ENCODE measurements at regions of chr10 and their contacts with region 1.

Region 1: DNA sequence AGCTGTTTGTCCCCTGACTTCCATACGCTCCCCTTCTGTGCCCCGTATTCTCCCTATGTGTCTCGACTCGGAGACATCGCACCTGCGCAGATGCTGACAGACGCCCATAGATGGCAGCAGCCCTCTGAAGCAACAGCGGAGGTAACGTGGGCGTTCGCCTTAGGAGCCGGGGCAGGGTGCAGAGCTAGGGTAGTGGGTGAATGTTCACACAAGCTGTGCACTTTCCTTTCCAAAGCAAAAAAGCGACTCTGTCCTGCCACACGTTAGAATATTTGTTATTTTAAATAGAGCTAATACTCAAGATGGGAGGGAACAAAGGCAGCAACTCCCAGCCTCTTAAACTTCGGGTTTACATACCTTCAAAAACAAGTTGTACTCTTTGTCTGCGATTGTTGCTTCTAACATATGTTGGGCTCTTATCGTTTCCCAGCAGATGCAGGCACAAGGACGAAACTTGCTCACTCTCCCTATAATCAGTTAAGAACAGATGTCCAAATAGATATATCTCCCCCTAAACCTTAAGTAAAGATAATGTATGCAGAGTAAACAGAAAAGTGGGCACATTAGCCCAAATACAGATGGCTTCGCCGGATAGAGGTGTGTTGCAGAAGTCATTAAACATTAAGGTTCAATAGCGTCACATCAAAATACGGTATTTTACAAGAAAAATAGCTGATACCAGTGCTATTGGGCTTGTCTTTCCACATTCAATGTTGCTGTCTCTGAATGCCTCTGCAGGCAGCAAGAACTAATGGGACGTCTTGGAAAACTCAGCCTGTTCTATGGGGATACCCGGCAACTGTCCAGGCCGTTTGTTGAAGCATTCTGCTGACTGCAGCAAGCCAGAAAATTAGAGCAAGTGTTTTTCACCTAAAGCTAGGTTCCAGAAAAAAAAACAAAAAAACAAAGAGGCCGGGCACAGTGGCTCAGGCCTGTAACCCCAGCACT is 340.3 kb upstream of the PRKCQ start:
- DNase-seq: peak; percentile 59 to 69 (median 63)
- H3K4me3 ChIP-seq: no peak overlapping the region
- H3K4me3 Mint-ChIP-seq: peak overlapping the region in 3 of 8 donors; percentile 12 to 61 (median 42)
- H3K27ac ChIP-seq: no peak overlapping the region
- H3K27ac Mint-ChIP-seq: peak overlapping the region in 2 of 7 donors; percentile 42 to 50
- H3K4me1 ChIP-seq: peaks cover 19% of the 10 kb centered on the region
- H3K4me1 Mint-ChIP-seq: peaks cover 16 to 19% (median 17%) of the 10 kb centered on the region in 4 donors
- H3K27me3 ChIP-seq: no peaks in the 10 kb centered on the region
- H3K27me3 Mint-ChIP-seq: peaks cover 0 to 4% of the 10 kb centered on the region in 2 donors

Region 2: GRCh38 chr10:6647811-6648526 is 272.4 kb before region 1 on chr10:
- CTCF ChIA-PET with region 1: no interaction called
- POLR2A ChIA-PET with region 1: no interaction called
- intact Hi-C with region 1: no loop called
- DNase-seq: peak; percentile 61 to 72 (median 65)
- H3K4me3 ChIP-seq: no peak overlapping the region
- H3K4me3 Mint-ChIP-seq: no peak overlapping the region
- H3K27ac ChIP-seq: no peak overlapping the region
- H3K27ac Mint-ChIP-seq: peak overlapping the region in 3 of 7 donors; percentile 4 to 75 (median 72)
- H3K4me1 ChIP-seq: peaks cover 23% of the 10 kb centered on the region
- H3K4me1 Mint-ChIP-seq: peaks cover 12 to 30% (median 17%) of the 10 kb centered on the region in 4 donors
- H3K27me3 ChIP-seq: no peaks in the 10 kb centered on the region
- H3K27me3 Mint-ChIP-seq: no peaks in the 10 kb centered on the region

Region 3: GRCh38 chr10:6936931-6937330 is 16.6 kb after region 1 on chr10:
- CTCF ChIA-PET with region 1: interaction called, 31 read pairs
- POLR2A ChIA-PET with region 1: no interaction called
- intact Hi-C with region 1: no loop called
- DNase-seq: no peak
- H3K4me3 ChIP-seq: no peak overlapping the region
- H3K4me3 Mint-ChIP-seq: no peak overlapping the region
- H3K27ac ChIP-seq: no peak overlapping the region
- H3K27ac Mint-ChIP-seq: no peak overlapping the region
- H3K4me1 ChIP-seq: no peaks in the 10 kb centered on the region
- H3K4me1 Mint-ChIP-seq: no peaks in the 10 kb centered on the region
- H3K27me3 ChIP-seq: no peaks in the 10 kb centered on the region
- H3K27me3 Mint-ChIP-seq: peaks cover 4 to 9% of the 10 kb centered on the region in 2 donors

Region 4: GRCh38 chr10:7027237-7027912 is 107.0 kb after region 1 on chr10:
- CTCF ChIA-PET with region 1: interaction called, 10 read pairs
- POLR2A ChIA-PET with region 1: no interaction called
- intact Hi-C with region 1: no loop called
- DNase-seq: no peak
- H3K4me3 ChIP-seq: no peak overlapping the region
- H3K4me3 Mint-ChIP-seq: no peak overlapping the region
- H3K27ac ChIP-seq: no peak overlapping the region
- H3K27ac Mint-ChIP-seq: no peak overlapping the region
- H3K4me1 ChIP-seq: peaks cover 22% of the 10 kb centered on the region
- H3K4me1 Mint-ChIP-seq: peaks cover 6 to 27% (median 18%) of the 10 kb centered on the region in 4 donors
- H3K27me3 ChIP-seq: no peaks in the 10 kb centered on the region
- H3K27me3 Mint-ChIP-seq: no peaks in the 10 kb centered on the region

Region 5: GRCh38 chr10:7121154-7121810 is 200.9 kb after region 1 on chr10:
- CTCF ChIA-PET with region 1: interaction called, 16 read pairs
- POLR2A ChIA-PET with region 1: no interaction called
- intact Hi-C with region 1: loop called (anchors 2 kb)
- DNase-seq: peak; percentile 48 to 65 (median 59)
- H3K4me3 ChIP-seq: no peak overlapping the region
- H3K4me3 Mint-ChIP-seq: no peak overlapping the region
- H3K27ac ChIP-seq: no peak overlapping the region
- H3K27ac Mint-ChIP-seq: peak overlapping the region in 5 of 7 donors; percentile 32 to 74 (median 71)
- H3K4me1 ChIP-seq: peaks cover 6% of the 10 kb centered on the region
- H3K4me1 Mint-ChIP-seq: peaks cover 4 to 7% (median 5%) of the 10 kb centered on the region in 4 donors
- H3K27me3 ChIP-seq: no peaks in the 10 kb centered on the region
- H3K27me3 Mint-ChIP-seq: peaks cover 0 to 5% of the 10 kb centered on the region in 2 donors

Region 6: DNA sequence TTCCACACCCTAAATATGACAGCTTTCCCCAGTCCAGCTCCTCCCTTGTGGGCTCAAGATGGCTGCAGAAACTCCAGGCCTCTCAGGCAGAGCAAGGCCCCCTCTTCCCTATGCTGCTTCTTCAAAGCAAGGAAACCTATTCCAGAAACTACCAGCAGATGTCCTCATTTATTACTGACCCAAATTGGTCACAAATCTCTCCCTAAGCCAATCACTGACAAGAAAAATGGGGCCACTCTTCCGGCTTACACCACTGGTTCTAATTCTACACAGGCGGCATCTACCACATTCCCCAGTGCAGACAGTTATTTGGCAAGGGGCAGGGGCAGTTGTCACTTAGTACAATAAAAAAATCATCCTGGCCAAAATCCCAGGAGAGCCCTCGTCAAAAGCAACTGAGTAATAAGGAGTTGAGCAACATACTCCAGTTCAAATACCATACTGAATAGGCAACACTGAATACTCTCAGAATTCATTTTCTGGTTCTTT is 340.1 kb after region 1 on chr10:
- CTCF ChIA-PET with region 1: interaction called, 8 read pairs
- POLR2A ChIA-PET with region 1: no interaction called
- intact Hi-C with region 1: loop called (anchors 1 kb)
- DNase-seq: peak in 4 of 5 donors; percentile 41 to 48 (median 43)
- H3K4me3 ChIP-seq: no peak overlapping the region
- H3K4me3 Mint-ChIP-seq: peak overlapping the region in 4 of 8 donors; percentile 1 to 78 (median 42)
- H3K27ac ChIP-seq: no peak overlapping the region
- H3K27ac Mint-ChIP-seq: peak overlapping the region in 6 of 7 donors; percentile 62 to 97 (median 84)
- H3K4me1 ChIP-seq: peaks cover 38% of the 10 kb centered on the region
- H3K4me1 Mint-ChIP-seq: peaks cover 34 to 52% (median 47%) of the 10 kb centered on the region in 4 donors
- H3K27me3 ChIP-seq: no peaks in the 10 kb centered on the region
- H3K27me3 Mint-ChIP-seq: no peaks in the 10 kb centered on the region

Region 7: GRCh38 chr10:7417103-7417623 is 496.8 kb after region 1 on chr10:
- CTCF ChIA-PET with region 1: interaction called, 180 read pairs
- POLR2A ChIA-PET with region 1: no interaction called
- intact Hi-C with region 1: loop called (anchors 1 kb)
- DNase-seq: peak in 4 of 5 donors; percentile 46 to 53 (median 50)
- H3K4me3 ChIP-seq: no peak overlapping the region
- H3K4me3 Mint-ChIP-seq: no peak overlapping the region
- H3K27ac ChIP-seq: no peak overlapping the region
- H3K27ac Mint-ChIP-seq: no peak overlapping the region
- H3K4me1 ChIP-seq: peaks cover 20% of the 10 kb centered on the region
- H3K4me1 Mint-ChIP-seq: peaks cover 8 to 16% (median 10%) of the 10 kb centered on the region in 4 donors
- H3K27me3 ChIP-seq: no peaks in the 10 kb centered on the region
- H3K27me3 Mint-ChIP-seq: no peaks in the 10 kb centered on the region

Region 8: GRCh38 chr10:7687228-7687907 is 767.0 kb after region 1 on chr10:
- CTCF ChIA-PET with region 1: interaction called, 16 read pairs
- POLR2A ChIA-PET with region 1: no interaction called
- intact Hi-C with region 1: no loop called
- DNase-seq: peak; percentile 66 to 76 (median 69)
- H3K4me3 ChIP-seq: no peak overlapping the region
- H3K4me3 Mint-ChIP-seq: peak overlapping the region in 2 of 8 donors; percentile 36 to 64
- H3K27ac ChIP-seq: no peak overlapping the region
- H3K27ac Mint-ChIP-seq: peak overlapping the region in 1 of 7 donors; percentile 66
- H3K4me1 ChIP-seq: no peaks in the 10 kb centered on the region
- H3K4me1 Mint-ChIP-seq: peaks cover 3 to 5% (median 3%) of the 10 kb centered on the region in 4 donors
- H3K27me3 ChIP-seq: no peaks in the 10 kb centered on the region
- H3K27me3 Mint-ChIP-seq: peaks cover 2 to 13% of the 10 kb centered on the region in 2 donors